MCF 10A (cell line): ENCODE measurements at regions of chr20 and their contacts with region 1.

Region 1: GRCh38 chr20:47379433-47380150 is 23.1 kb upstream of the ZMYND8 start:
- DNase-seq: peak; percentile 63
- H3K4me3 Mint-ChIP-seq: no peak overlapping the region
- H3K27ac Mint-ChIP-seq: no peak overlapping the region
- H3K4me1 Mint-ChIP-seq: peaks cover 14% of the 10 kb centered on the region
- H3K27me3 Mint-ChIP-seq: no peaks in the 10 kb centered on the region
- CTCF ChIP-seq: no peak

Region 2: DNA sequence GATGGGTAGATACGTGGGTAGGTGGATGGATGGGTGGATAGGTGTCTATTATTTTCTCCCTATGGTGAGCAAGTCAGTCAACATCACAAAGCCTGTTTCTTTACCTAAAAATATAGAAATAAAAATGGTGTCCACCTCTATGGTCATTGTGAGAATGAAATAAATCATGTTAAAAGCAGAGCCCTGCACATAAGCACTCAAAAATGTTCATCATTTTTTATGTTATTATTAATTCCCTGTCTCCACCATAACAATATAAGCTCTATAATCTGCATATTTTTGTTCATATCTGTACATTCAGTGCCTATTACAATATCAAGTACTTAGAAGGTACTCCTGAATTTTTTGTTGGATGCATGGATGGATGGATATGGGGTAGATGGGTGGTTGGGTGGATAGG is 200.7 kb before region 1 on chr20:
- CTCF ChIA-PET with region 1: no interaction called
- POLR2A ChIA-PET with region 1: no interaction called
- intact Hi-C with region 1: no loop called
- DNase-seq: no peak
- H3K4me3 Mint-ChIP-seq: no peak overlapping the region
- H3K27ac Mint-ChIP-seq: no peak overlapping the region
- H3K4me1 Mint-ChIP-seq: no peaks in the 10 kb centered on the region
- H3K27me3 Mint-ChIP-seq: no peaks in the 10 kb centered on the region
- CTCF ChIP-seq: no peak

Region 3: GRCh38 chr20:47196091-47197081 is 183.2 kb before region 1 on chr20:
- CTCF ChIA-PET with region 1: interaction called, 108 read pairs
- POLR2A ChIA-PET with region 1: interaction called, 5 read pairs
- intact Hi-C with region 1: loop called (anchors 1 kb)
- DNase-seq: peak; percentile 70
- H3K4me3 Mint-ChIP-seq: no peak overlapping the region
- H3K27ac Mint-ChIP-seq: no peak overlapping the region
- H3K4me1 Mint-ChIP-seq: peaks cover 5% of the 10 kb centered on the region
- H3K27me3 Mint-ChIP-seq: no peaks in the 10 kb centered on the region
- CTCF ChIP-seq: peak; percentile 93

Region 4: GRCh38 chr20:47252879-47253307 is 126.7 kb before region 1 on chr20:
- CTCF ChIA-PET with region 1: interaction called, 13 read pairs
- POLR2A ChIA-PET with region 1: interaction called, 3 read pairs
- intact Hi-C with region 1: no loop called
- DNase-seq: no peak
- H3K4me3 Mint-ChIP-seq: no peak overlapping the region
- H3K27ac Mint-ChIP-seq: peak overlapping the region; percentile 7
- H3K4me1 Mint-ChIP-seq: peaks cover 10% of the 10 kb centered on the region
- H3K27me3 Mint-ChIP-seq: no peaks in the 10 kb centered on the region
- CTCF ChIP-seq: no peak

Region 5: DNA sequence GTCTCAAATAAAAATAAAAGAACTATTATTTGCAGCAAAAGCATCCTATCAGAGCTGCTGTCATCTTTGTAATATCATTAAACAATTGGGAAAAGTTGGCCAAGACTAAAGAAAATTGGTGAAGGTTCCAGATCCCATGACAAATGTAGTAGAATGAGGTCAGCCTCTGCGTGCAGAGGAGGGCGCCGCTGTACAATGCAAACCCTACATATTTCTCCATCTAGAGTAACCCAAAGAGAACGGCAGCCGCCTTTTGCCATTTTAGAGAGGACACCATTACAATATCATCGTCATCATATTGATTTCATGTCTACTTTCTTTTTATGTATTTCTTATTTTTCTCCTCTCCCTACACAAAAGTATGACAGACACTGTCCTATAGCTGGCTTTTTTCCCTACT is 82.6 kb before region 1 on chr20:
- CTCF ChIA-PET with region 1: interaction called, 34 read pairs
- POLR2A ChIA-PET with region 1: interaction called, 4 read pairs
- intact Hi-C with region 1: no loop called
- DNase-seq: peak; percentile 20
- H3K4me3 Mint-ChIP-seq: no peak overlapping the region
- H3K27ac Mint-ChIP-seq: peak overlapping the region; percentile 29
- H3K4me1 Mint-ChIP-seq: peaks cover 13% of the 10 kb centered on the region
- H3K27me3 Mint-ChIP-seq: no peaks in the 10 kb centered on the region
- CTCF ChIP-seq: no peak

Region 6: DNA sequence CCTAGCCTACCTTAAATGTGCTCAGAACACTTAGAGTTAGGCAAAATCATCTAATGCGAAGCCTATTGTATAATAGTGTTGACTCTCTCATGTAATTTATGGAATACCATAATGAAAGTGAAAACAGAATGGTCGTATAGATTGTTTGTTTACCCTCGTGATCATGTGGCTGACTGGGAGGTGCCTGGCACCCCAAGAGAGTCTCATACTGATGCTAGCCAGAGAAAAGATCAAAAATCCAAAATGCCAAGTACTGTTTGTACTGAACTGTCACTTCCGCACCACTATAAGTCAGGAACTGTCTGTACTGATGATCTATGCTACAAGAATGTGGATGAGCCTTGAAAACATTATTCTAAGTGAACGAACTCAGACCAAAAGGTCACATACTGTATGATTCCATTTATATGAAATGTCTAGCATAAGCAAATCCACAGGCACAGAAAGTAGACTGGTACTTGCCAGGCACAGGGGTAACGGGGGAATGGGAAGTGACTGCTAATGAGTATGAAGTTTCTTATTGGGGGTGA is 45.5 kb before region 1 on chr20:
- CTCF ChIA-PET with region 1: interaction called, 15 read pairs
- POLR2A ChIA-PET with region 1: interaction called, 19 read pairs
- intact Hi-C with region 1: no loop called
- DNase-seq: peak; percentile 96
- H3K4me3 Mint-ChIP-seq: peak overlapping the region; percentile 72
- H3K27ac Mint-ChIP-seq: peak overlapping the region; percentile 96
- H3K4me1 Mint-ChIP-seq: peaks cover 67% of the 10 kb centered on the region
- H3K27me3 Mint-ChIP-seq: no peaks in the 10 kb centered on the region
- CTCF ChIP-seq: no peak

Region 7: DNA sequence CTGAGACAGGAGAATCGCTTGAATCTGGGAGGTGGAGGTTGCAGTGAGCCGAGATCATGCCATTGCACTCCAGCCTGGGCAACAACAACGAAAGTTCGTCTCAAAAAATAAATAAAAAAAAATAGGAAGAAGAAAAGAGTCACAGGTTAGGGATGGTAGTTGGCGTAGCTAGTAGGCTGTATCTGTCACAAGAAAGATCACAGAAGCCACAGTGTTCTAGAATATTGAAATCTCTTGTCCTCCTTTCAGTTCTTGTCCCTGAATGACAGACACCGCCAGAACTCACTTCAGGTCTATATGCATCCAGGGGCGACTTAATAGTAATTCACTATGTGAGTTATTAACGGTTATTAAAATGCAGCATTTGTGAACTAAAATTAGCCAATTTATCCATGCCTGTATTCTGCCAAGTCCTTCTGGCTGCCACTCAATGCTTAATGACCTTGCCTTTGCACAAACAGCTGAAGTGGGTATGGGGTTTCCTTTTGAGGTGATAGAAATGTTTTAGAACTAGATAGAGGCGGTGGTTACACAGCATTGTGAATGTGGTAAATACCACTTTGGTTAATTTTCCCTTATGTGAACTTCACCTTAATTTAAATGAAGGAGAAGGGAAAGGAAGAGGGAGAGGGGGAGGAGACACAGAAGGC is 18.2 kb after region 1 on chr20:
- CTCF ChIA-PET with region 1: interaction called, 16 read pairs
- POLR2A ChIA-PET with region 1: interaction called, 12 read pairs
- intact Hi-C with region 1: no loop called
- DNase-seq: no peak
- H3K4me3 Mint-ChIP-seq: no peak overlapping the region
- H3K27ac Mint-ChIP-seq: no peak overlapping the region
- H3K4me1 Mint-ChIP-seq: peaks cover 3% of the 10 kb centered on the region
- H3K27me3 Mint-ChIP-seq: no peaks in the 10 kb centered on the region
- CTCF ChIP-seq: no peak

Region 8: GRCh38 chr20:47501483-47502270 is 122.1 kb after region 1 on chr20 and contains the start of gene NCOA3:
- CTCF ChIA-PET with region 1: interaction called, 13 read pairs
- POLR2A ChIA-PET with region 1: interaction called, 15 read pairs
- intact Hi-C with region 1: no loop called
- DNase-seq: peak; percentile 95
- H3K4me3 Mint-ChIP-seq: peak within 1 kb of the TSS; percentile 94
- H3K27ac Mint-ChIP-seq: peak within 1 kb of the TSS; percentile 95
- H3K4me1 Mint-ChIP-seq: peaks cover 24% of the 10 kb centered on the region
- H3K27me3 Mint-ChIP-seq: no peaks in the 10 kb centered on the region
- CTCF ChIP-seq: peak; percentile 41
- total RNA-seq, gene NCOA3: 61.4 and 68.6 TPM in 2 replicates